ENCODE measurements at regions of chr16 and their contacts with region 1.

Region 1: DNA sequence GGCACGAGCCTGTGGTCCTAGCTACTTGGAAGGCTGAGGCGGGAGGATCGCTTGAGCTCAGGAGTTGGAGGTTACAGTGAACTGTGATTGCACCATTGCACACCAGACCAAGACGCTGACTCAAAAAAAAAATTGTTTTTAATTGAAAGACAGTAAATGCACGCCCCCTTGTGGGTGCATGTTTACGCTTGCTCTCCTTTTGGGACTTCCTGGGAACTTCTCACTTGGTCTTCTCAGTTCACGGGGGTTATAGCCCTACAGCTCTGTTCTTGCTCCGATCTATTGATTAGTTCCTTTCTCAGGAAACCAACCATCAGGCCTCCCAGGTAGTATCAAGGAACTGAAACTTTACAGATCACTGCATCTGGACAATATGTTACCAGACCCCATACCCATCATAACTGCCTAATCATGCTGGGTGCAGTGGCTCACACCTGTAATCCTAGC is 14.2 kb upstream of the RIPOR1 start:
- DNase-seq: peak; percentile 71
- ATAC-seq: peak; percentile 64
- H3K4me3 Mint-ChIP-seq: no peak overlapping the region
- H3K27ac Mint-ChIP-seq: no peak overlapping the region
- H3K4me1 Mint-ChIP-seq: no peaks in the 10 kb centered on the region
- H3K27me3 Mint-ChIP-seq: peaks cover 34% of the 10 kb centered on the region
- CTCF ChIP-seq: peak; percentile 59

Region 2: GRCh38 chr16:67490335-67491096 is 23.9 kb before region 1 on chr16:
- CTCF ChIA-PET with region 1: interaction called, 45 read pairs
- POLR2A ChIA-PET with region 1: no interaction called
- DNase-seq: no peak
- ATAC-seq: no peak
- H3K4me3 Mint-ChIP-seq: no peak overlapping the region
- H3K27ac Mint-ChIP-seq: no peak overlapping the region
- H3K4me1 Mint-ChIP-seq: peaks cover 11% of the 10 kb centered on the region
- H3K27me3 Mint-ChIP-seq: peaks cover 99% of the 10 kb centered on the region
- CTCF ChIP-seq: no peak

Region 3: DNA sequence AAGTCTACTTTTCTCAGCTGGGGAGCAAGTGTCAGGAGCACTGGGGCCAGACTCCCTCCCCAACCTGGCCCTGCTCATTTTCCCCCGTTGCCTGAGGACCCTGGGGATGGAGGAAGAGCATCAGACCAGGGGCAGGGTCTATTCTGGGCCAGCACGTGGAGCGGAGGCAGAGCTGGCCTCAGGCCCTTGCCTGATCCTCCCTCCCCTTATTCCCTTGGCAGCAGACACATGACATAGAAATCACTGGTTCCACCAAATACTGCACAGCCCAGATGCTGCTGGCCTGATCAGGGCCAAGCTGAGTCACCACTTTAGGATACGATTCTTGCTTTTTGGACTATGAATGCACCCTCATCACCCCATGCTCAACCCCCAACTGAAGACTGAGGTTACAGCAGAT is 15.3 kb before region 1 on chr16:
- CTCF ChIA-PET with region 1: interaction called, 25 read pairs
- POLR2A ChIA-PET with region 1: no interaction called
- DNase-seq: no peak
- ATAC-seq: no peak
- H3K4me3 Mint-ChIP-seq: no peak overlapping the region
- H3K27ac Mint-ChIP-seq: no peak overlapping the region
- H3K4me1 Mint-ChIP-seq: no peaks in the 10 kb centered on the region
- H3K27me3 Mint-ChIP-seq: peaks cover 86% of the 10 kb centered on the region
- CTCF ChIP-seq: no peak

Region 4: DNA sequence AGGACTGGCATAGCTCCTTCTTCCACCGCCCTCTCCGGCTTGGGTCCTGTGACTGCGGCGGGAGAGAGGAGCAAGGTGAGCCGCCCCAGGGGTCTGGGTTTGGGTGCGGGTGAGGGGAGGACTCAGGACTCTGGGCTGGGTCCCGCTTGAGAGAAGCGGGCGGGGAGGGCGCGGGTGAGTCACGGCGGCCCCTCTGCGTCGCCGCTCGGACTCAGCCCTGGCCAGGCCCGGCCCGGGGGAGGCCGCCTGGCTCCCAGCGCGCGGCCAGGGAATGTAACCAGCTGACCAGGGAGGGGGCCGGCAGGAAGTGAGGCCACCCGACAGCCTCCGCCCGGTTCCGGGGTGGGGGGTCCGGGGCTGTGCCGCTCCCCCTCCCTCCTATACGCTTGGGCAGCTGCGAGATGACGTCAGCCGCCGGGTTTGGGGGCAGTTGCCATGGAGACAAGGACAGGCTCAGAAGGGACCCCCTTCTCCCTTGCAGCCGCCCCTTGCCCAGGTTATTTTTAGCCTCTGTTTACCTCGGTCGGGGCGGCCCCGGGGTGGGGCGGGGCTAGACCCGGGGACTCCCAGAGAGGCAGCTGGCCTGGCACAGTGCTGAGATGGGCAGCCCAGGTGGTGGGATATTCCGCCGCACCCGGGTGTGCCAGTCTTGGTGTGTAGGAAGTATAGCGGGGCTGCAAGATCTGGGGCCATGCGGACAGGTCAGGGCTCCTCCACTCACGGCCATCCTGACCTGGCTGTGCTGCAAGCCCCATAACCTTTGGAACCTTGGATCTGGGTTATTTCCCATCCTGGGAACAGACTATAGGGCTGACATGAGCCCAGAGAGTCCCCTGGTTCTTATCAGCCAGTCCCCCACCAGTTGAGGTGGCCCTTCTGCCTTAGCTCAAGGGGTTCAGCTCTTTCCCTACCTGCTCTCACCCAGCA is 15.9 kb after region 1 on chr16:
- CTCF ChIA-PET with region 1: interaction called, 184 read pairs
- POLR2A ChIA-PET with region 1: interaction called, 4 read pairs
- DNase-seq: peak; percentile 53
- ATAC-seq: peak; percentile 4
- H3K4me3 Mint-ChIP-seq: peak overlapping the region; percentile 77
- H3K27ac Mint-ChIP-seq: no peak overlapping the region
- H3K4me1 Mint-ChIP-seq: peaks cover 5% of the 10 kb centered on the region
- H3K27me3 Mint-ChIP-seq: peaks cover 94% of the 10 kb centered on the region
- CTCF ChIP-seq: no peak

Region 5: DNA sequence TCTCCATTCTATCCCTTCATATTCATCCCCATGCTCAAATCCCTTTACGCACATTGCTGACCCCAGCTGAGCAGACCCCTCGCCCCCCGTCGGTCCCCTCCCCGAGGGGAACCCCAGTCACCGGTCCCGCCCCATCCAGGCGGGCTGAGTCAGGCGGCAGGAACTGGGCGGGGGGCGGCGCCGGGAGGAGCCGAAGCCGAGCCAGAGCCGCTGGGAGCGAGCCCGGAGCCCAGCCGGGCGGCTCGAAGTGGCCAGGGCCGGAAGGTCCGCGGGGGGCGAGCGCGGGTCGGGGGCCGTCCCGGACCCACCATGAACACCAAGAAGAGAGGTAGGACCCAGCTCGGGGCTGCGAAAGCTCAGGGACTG is 22.8 kb after region 1 on chr16:
- CTCF ChIA-PET with region 1: interaction called, 184 read pairs
- POLR2A ChIA-PET with region 1: interaction called, 4 read pairs
- DNase-seq: peak; percentile 62
- ATAC-seq: peak; percentile 56
- H3K4me3 Mint-ChIP-seq: peak overlapping the region; percentile 76
- H3K27ac Mint-ChIP-seq: no peak overlapping the region
- H3K4me1 Mint-ChIP-seq: peaks cover 14% of the 10 kb centered on the region
- H3K27me3 Mint-ChIP-seq: peaks cover 96% of the 10 kb centered on the region
- CTCF ChIP-seq: no peak